ENCODE measurements at regions of chr7 and their contacts with region 1.

Region 1: DNA sequence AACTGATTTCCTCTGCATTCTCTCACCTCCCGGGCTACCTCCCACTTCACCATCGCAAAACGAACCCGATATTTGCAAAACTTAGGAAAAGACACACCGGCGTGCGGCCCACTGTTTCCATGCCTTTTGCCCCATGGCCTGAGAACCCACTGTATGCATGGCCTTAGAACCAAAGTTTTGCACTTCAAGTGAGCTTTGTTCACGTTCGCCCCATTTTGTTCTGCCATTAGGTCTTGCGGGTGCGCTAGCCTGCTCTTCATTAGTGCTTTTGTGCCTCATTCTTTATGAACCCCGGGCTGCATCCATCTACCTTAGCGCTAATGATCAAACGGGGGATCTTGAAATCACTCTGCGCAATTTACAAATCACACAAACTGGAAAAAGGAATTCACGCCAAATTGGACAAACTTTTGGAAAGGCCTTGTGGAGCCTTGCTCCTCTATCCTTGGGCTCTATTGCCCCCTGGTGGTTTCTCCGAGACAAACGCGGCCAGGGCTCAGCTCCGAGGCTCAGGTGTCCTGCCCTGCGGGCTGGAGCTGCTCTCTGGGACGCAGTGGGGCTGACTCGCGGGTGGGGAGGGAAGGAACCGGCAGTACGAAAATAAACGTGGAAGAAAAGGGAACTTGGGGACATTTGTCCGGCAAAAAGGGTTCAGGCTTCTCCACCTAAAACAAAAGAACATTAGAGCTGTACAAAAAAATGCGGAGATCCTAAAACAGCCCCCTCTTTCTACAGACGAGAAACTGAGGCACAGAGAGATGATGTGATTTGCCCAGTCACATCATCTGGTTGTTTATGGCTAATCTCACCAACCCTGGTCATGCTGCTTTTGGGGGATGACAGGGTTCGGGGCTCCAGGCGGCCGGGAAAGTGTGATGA is 300.4 kb upstream of the NFE2L3 start:
- DNase-seq: peak; percentile 84 to 91 (median 89)
- H3K4me3 ChIP-seq: peak overlapping the region; percentile 21
- H3K27ac ChIP-seq: peak overlapping the region in 1 of 2 donors; percentile 68
- H3K4me1 ChIP-seq: peaks cover 20% of the 10 kb centered on the region
- H3K27me3 ChIP-seq: no peaks in the 10 kb centered on the region
- CTCF ChIP-seq: peak; percentile 72 to 87 (median 81)
- EP300 ChIP-seq: no peak
- POLR2A ChIP-seq: no peak

Region 2: DNA sequence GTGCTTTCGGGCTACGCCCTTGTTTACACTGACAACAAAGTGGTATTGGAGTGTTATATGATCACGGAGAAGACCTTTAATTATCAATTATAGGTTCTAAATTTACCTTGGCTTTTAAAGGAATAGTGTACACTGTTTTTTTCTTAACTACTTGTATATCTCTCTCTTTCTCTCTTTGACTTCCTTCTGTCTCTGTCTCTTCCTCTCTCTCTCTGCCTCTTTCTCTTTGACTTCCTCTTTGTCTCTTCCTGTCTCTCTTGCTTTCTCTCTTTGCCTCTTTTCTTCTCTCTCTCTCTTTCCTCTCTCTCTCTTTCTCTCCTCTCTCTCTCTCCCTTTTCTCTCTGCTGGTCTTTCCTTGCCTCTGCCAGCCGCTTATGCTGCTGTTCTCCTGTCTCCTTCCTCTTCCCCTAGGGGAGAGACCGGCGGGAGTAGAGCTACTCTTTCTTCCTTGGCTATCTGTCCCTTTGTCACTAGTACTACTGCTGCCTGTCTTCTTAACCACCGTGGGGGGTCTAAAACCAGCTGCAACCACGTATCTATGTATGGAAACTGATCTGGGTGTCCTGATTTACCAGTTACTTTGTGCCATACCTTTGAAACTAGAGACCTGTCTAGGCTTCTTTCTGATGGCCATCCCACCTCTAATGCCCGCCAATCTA is 1057.5 kb before region 1 on chr7:
- intact Hi-C with region 1: no loop called
- DNase-seq: no peak
- H3K4me3 ChIP-seq: no peak overlapping the region
- H3K27ac ChIP-seq: no peak overlapping the region
- H3K4me1 ChIP-seq: no peaks in the 10 kb centered on the region
- H3K27me3 ChIP-seq: no peaks in the 10 kb centered on the region
- CTCF ChIP-seq: no peak
- EP300 ChIP-seq: no peak
- POLR2A ChIP-seq: no peak

Region 3: GRCh38 chr7:25389489-25390106 is 462.0 kb before region 1 on chr7:
- intact Hi-C with region 1: loop called (anchors 2 to 5 kb)
- DNase-seq: no peak
- H3K4me3 ChIP-seq: no peak overlapping the region
- H3K27ac ChIP-seq: no peak overlapping the region
- H3K4me1 ChIP-seq: peaks cover 8% of the 10 kb centered on the region
- H3K27me3 ChIP-seq: no peaks in the 10 kb centered on the region
- CTCF ChIP-seq: peak; percentile 43 to 61 (median 44)
- EP300 ChIP-seq: no peak
- POLR2A ChIP-seq: no peak

Region 4: DNA sequence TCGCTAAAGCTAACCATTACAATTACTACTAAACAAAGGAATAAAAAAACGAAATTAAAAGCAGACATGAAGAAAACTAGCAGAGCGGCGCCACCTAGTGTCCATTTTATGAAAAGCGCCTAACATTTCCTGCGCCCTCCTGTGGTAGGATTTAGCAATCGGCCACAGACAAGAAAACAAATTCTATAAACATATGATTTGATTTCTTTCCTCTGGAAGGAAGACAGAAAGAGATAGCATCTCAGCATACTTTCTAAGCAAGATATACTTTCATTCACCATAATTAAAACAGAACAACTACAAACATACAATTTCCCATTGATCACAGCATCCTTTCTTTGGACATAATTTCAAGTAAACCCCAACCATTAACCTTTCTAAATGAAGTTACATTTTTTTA is 285.6 kb before region 1 on chr7:
- intact Hi-C with region 1: loop called (anchors 2 to 5 kb)
- DNase-seq: peak; percentile 51 to 80 (median 76)
- H3K4me3 ChIP-seq: no peak overlapping the region
- H3K27ac ChIP-seq: no peak overlapping the region
- H3K4me1 ChIP-seq: peaks cover 3% of the 10 kb centered on the region
- H3K27me3 ChIP-seq: no peaks in the 10 kb centered on the region
- CTCF ChIP-seq: peak; percentile 98 to 100 (median 98)
- EP300 ChIP-seq: no peak
- POLR2A ChIP-seq: no peak

Region 5: DNA sequence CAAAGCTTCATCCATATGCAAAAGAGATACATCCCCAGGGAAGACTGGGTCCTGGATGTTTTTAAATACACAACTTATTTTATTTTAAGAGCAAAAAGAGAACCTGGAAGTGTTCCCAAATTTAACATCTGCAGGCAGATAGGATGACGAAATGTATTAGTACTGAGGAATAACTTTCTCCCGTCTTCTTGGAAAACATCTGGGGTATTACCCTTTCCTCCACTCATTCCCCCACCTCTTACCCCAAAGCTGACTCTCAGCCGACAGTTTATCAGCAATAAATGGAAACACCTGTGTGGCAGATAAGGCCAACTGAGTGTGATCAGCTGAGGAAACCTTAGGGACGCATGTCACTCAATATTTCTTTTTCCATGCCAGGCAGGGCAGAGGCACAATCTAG is 187.7 kb before region 1 on chr7:
- intact Hi-C with region 1: loop called in 2 of 4 experiments (anchors 2 to 10 kb)
- DNase-seq: peak in 1 of 5 donors; percentile 35
- H3K4me3 ChIP-seq: no peak overlapping the region
- H3K27ac ChIP-seq: no peak overlapping the region
- H3K4me1 ChIP-seq: peaks cover 15% of the 10 kb centered on the region
- H3K27me3 ChIP-seq: no peaks in the 10 kb centered on the region
- CTCF ChIP-seq: no peak
- EP300 ChIP-seq: no peak
- POLR2A ChIP-seq: no peak

Region 6: GRCh38 chr7:25716421-25716820 is 135.2 kb before region 1 on chr7:
- intact Hi-C with region 1: loop called in 1 of 4 experiments (anchors 10 kb)
- DNase-seq: no peak
- H3K4me3 ChIP-seq: no peak overlapping the region
- H3K27ac ChIP-seq: no peak overlapping the region
- H3K4me1 ChIP-seq: peaks cover 14% of the 10 kb centered on the region
- H3K27me3 ChIP-seq: no peaks in the 10 kb centered on the region
- CTCF ChIP-seq: no peak
- EP300 ChIP-seq: no peak
- POLR2A ChIP-seq: no peak